ENCODE measurements at regions of chr5 and their contacts with region 1.

Region 1: GRCh38 chr5:38441453-38442246 is 114.8 kb downstream of the LIFR start:
- DNase-seq: peak; percentile 86 to 97 (median 90)
- H3K4me3 ChIP-seq: no peak overlapping the region
- H3K27ac ChIP-seq: no peak overlapping the region
- H3K4me1 ChIP-seq: no peaks in the 10 kb centered on the region
- H3K27me3 ChIP-seq: no peaks in the 10 kb centered on the region
- CTCF ChIP-seq: peak; percentile 92 to 97 (median 96)
- POLR2A ChIP-seq: no peak

Region 2: GRCh38 chr5:38556599-38557305 is 115.1 kb after region 1 on chr5 and contains the start of gene LIFR:
- intact Hi-C with region 1: loop called in 1 of 2 experiments (anchors 5 kb)
- DNase-seq: peak; percentile 85 to 90 (median 86)
- H3K4me3 ChIP-seq: peak within 1 kb of the TSS; percentile 16 to 97 (median 76)
- H3K27ac ChIP-seq: peak within 1 kb of the TSS; percentile 18 to 98 (median 92)
- H3K4me1 ChIP-seq: peaks cover 7 to 15% of the 10 kb centered on the region in 2 donors
- H3K27me3 ChIP-seq: no peaks in the 10 kb centered on the region
- CTCF ChIP-seq: peak in 1 of 6 experiments; percentile 7
- POLR2A ChIP-seq: peak; percentile 23 to 75
- total RNA-seq, gene LIFR: 28.7 to 118 (median 67.5) TPM

Region 3: DNA sequence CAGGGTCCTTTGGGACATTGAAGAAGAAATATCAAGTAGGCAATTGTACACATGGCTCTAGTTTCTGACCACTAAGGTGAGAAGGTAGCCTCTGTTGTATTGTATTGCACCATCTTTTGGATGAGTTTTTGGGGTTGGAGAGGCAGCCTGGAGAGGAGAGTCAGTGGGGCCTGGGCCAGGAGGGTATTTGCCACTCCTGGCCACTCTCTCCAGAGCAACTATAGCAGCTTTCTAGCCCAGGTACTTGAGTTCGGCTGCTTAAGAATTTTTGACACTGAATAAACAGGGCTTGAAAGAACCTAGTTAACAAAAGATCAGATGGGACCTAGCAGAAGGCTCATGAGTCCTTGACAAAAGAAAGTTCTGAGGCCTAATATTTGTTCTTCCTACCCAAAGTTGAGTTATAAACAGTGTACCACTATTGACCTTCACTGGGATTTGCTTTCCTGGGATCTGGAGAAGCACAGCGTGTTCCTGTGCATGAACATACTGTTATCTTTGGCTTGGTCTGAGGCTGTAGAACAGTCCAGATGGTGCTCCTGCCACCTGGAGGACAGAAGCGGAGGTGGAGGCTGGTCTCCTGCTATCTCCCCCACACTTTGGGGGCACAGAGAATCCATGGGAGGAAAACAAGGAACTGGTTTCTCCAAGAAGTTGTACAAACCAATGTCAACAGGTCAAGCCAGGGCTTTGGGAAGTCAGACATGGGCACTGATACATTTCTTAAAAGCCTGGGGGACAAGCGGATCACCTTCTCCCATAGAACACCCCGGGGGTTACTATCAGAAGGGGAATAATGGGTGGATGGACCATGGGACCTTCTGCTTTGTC is 225.2 kb after region 1 on chr5:
- intact Hi-C with region 1: loop called in 1 of 2 experiments (anchors 5 kb)
- DNase-seq: peak; percentile 20 to 74 (median 32)
- H3K4me3 ChIP-seq: no peak overlapping the region
- H3K27ac ChIP-seq: peak overlapping the region in 1 of 5 donors; percentile 55
- H3K4me1 ChIP-seq: peaks cover 4 to 13% of the 10 kb centered on the region in 2 donors
- H3K27me3 ChIP-seq: no peaks in the 10 kb centered on the region
- CTCF ChIP-seq: peak; percentile 25 to 69 (median 44)
- POLR2A ChIP-seq: no peak

Region 4: GRCh38 chr5:38809388-38810359 is 368.0 kb after region 1 on chr5:
- intact Hi-C with region 1: loop called (anchors 5 to 10 kb)
- DNase-seq: peak; percentile 79 to 93 (median 87)
- H3K4me3 ChIP-seq: no peak overlapping the region
- H3K27ac ChIP-seq: peak overlapping the region in 3 of 5 donors; percentile 43 to 63 (median 54)
- H3K4me1 ChIP-seq: peaks cover 4 to 37% of the 10 kb centered on the region in 2 donors
- H3K27me3 ChIP-seq: no peaks in the 10 kb centered on the region
- CTCF ChIP-seq: peak; percentile 69 to 93 (median 86)
- POLR2A ChIP-seq: no peak

Region 5: GRCh38 chr5:38922199-38922598 is 480.5 kb after region 1 on chr5:
- intact Hi-C with region 1: loop called in 1 of 2 experiments (anchors 10 kb)
- DNase-seq: peak in 6 of 7 donors; percentile 48 to 73 (median 64)
- H3K4me3 ChIP-seq: no peak overlapping the region
- H3K27ac ChIP-seq: no peak overlapping the region
- H3K4me1 ChIP-seq: peaks cover 8 to 11% of the 10 kb centered on the region in 2 donors
- H3K27me3 ChIP-seq: no peaks in the 10 kb centered on the region
- CTCF ChIP-seq: peak; percentile 59 to 78 (median 71)
- POLR2A ChIP-seq: no peak